Caco-2 (cell line): ENCODE measurements at regions of chr4 and their contacts with region 1.

Region 1: GRCh38 chr4:169069972-169070902 is 60.2 kb upstream of the CBR4 start:
- DNase-seq: peak; percentile 90 to 93
- H3K4me3 ChIP-seq: no peak overlapping the region
- H3K4me3 Mint-ChIP-seq: peak overlapping the region; percentile 60
- H3K27ac Mint-ChIP-seq: peak overlapping the region; percentile 92
- H3K4me1 ChIP-seq: peaks cover 50% of the 10 kb centered on the region
- H3K4me1 Mint-ChIP-seq: peaks cover 30% of the 10 kb centered on the region
- H3K27me3 ChIP-seq: no peaks in the 10 kb centered on the region
- H3K27me3 Mint-ChIP-seq: no peaks in the 10 kb centered on the region
- CTCF ChIP-seq: no peak

Region 2: GRCh38 chr4:169010125-169011023 is 59.9 kb before region 1 on chr4 and contains the start of gene CBR4:
- CTCF ChIA-PET with region 1: interaction called, 3 read pairs
- POLR2A ChIA-PET with region 1: interaction called, 28 read pairs
- intact Hi-C with region 1: loop called (anchors 1 kb)
- DNase-seq: peak; percentile 94 to 97
- H3K4me3 ChIP-seq: peak within 1 kb of the TSS; percentile 65
- H3K4me3 Mint-ChIP-seq: peak within 1 kb of the TSS; percentile 91
- H3K27ac Mint-ChIP-seq: peak within 1 kb of the TSS; percentile 97
- H3K4me1 ChIP-seq: peaks cover 28% of the 10 kb centered on the region
- H3K4me1 Mint-ChIP-seq: peaks cover 16% of the 10 kb centered on the region
- H3K27me3 ChIP-seq: no peaks in the 10 kb centered on the region
- H3K27me3 Mint-ChIP-seq: no peaks in the 10 kb centered on the region
- CTCF ChIP-seq: peak; percentile 23 to 41
- total RNA-seq, gene CBR4: 21.4 and 22.5 TPM in 2 replicates

Region 3: GRCh38 chr4:169024762-169025161 is 45.5 kb before region 1 on chr4:
- CTCF ChIA-PET with region 1: no interaction called
- POLR2A ChIA-PET with region 1: no interaction called
- intact Hi-C with region 1: loop called (anchors 1 kb)
- DNase-seq: peak in 1 of 2 experiments; percentile 43
- H3K4me3 ChIP-seq: no peak overlapping the region
- H3K4me3 Mint-ChIP-seq: no peak overlapping the region
- H3K27ac Mint-ChIP-seq: no peak overlapping the region
- H3K4me1 ChIP-seq: no peaks in the 10 kb centered on the region
- H3K4me1 Mint-ChIP-seq: no peaks in the 10 kb centered on the region
- H3K27me3 ChIP-seq: no peaks in the 10 kb centered on the region
- H3K27me3 Mint-ChIP-seq: no peaks in the 10 kb centered on the region
- CTCF ChIP-seq: peak; percentile 32 to 54

Region 4: DNA sequence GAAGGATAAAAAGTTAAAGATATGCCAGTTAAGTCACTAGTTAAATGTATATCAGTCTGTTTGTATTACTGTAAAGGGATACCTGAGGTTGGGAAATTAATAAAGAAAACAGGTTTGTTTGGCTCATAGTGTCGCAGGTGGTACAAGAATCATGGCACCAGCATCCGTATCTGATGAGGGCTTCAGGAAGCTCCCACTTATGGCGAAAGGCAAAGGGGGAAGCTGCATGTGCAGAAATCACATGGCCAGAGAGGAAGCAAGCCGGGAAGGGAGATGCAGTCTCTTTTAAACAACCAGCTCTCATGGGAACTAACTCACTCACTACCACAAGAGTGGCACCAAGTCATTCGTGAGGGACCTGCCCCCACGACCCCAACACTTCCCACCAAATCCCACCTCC is 292.4 kb after region 1 on chr4:
- CTCF ChIA-PET with region 1: no interaction called
- POLR2A ChIA-PET with region 1: no interaction called
- intact Hi-C with region 1: no loop called
- DNase-seq: no peak
- H3K4me3 ChIP-seq: no peak overlapping the region
- H3K4me3 Mint-ChIP-seq: no peak overlapping the region
- H3K27ac Mint-ChIP-seq: no peak overlapping the region
- H3K4me1 ChIP-seq: no peaks in the 10 kb centered on the region
- H3K4me1 Mint-ChIP-seq: no peaks in the 10 kb centered on the region
- H3K27me3 ChIP-seq: no peaks in the 10 kb centered on the region
- H3K27me3 Mint-ChIP-seq: no peaks in the 10 kb centered on the region
- CTCF ChIP-seq: no peak

Region 5: DNA sequence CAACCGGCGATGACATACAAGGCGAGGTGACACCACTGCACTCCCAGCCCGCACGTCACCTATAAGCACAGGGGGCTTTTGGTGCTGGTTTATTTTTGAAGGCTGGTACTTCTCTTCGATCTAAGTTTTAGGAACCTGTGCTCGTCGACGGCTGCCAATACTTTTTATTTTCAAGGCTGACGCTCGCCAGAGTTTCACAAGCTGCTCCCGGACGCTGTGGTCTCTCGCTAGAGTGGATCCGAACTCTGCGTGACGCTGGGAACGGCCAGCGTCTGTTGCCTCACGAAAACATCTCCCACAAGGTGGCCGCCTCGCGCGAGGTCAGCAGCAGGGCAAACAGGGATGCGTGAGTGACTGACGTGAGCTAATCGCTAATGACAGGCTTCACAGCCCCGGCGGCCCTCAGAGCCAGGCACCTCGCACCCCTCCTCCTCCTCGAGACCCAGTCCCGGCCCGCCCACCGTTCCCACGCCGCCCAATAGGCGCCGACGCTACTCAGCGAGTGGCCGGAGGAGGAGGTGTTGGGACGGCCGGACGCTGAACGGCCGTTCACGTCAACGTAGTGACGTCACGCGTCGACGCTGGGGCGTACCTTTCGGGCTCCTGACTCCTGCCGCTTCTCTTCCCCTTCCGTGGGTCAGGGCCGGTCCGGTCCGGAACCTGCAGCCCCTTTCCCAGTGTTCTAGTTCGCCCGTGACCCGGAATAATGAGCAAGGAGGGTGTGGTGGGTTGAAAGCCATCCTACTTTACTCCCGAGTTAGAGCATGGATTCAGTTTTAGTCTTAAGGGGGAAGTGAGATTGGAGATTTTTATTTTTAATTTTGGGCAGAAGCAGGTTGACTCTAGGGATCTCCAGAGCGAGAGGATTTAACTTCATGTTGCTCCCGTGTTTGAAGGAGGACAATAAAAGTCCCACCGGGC is 550.0 kb after region 1 on chr4 and contains the start of gene CLCN3:
- CTCF ChIA-PET with region 1: no interaction called
- POLR2A ChIA-PET with region 1: no interaction called
- intact Hi-C with region 1: loop called (anchors 5 kb)
- DNase-seq: peak; percentile 97
- H3K4me3 ChIP-seq: peak within 1 kb of the TSS; percentile 62
- H3K4me3 Mint-ChIP-seq: peak within 1 kb of the TSS; percentile 84
- H3K27ac Mint-ChIP-seq: peak within 1 kb of the TSS; percentile 95
- H3K4me1 ChIP-seq: peaks cover 19% of the 10 kb centered on the region
- H3K4me1 Mint-ChIP-seq: no peaks in the 10 kb centered on the region
- H3K27me3 ChIP-seq: no peaks in the 10 kb centered on the region
- H3K27me3 Mint-ChIP-seq: no peaks in the 10 kb centered on the region
- CTCF ChIP-seq: no peak
- total RNA-seq, gene CLCN3: 36.4 and 42.1 TPM in 2 replicates